ENCODE measurements at regions of chr3 and their contacts with region 1.

Region 1: DNA sequence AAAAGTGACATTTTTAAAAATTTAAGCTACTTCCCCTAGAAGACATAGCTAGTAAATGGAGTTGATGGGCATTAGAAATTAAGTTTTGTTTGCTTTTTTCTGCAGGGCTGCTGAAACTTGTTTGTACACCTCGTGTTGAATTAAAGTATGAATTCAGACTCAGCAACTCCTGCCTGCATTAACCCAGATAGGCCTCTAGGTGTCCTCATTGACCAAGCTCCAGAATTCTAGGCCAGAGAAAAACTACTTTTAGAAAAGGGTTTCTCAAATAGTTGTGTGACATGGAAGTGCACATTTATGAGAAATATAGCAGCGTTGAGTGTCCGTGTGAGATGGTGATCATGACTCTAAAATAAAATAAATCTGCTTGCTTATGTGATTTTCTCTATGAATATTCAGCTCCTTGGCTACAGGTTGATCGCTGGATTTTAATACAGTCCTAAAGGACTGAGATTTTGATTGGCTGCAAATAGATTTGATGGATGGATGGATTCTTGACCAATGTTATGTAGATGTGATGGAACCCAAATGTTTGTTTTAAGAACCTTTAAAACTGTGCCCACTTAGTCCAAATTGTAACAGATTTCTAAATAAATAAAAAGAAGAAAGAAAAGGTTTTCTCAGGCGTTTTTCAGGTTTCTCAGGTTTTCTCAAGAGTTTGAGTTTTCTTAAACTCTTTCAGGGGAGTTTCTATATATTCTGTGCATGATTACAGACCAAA is 39.4 kb upstream of the LMOD3 start:
- DNase-seq: peak; percentile 35
- H3K4me3 Mint-ChIP-seq: no peak overlapping the region
- H3K27ac Mint-ChIP-seq: no peak overlapping the region
- H3K4me1 Mint-ChIP-seq: peaks cover 14% of the 10 kb centered on the region
- H3K27me3 Mint-ChIP-seq: peaks cover 6% of the 10 kb centered on the region

Region 2: GRCh38 chr3:69095636-69096035 is 66.1 kb before region 1 on chr3:
- CTCF ChIA-PET with region 1: no interaction called
- POLR2A ChIA-PET with region 1: no interaction called
- intact Hi-C with region 1: no loop called
- DNase-seq: peak; percentile 63
- H3K4me3 Mint-ChIP-seq: peak overlapping the region; percentile 55
- H3K27ac Mint-ChIP-seq: peak overlapping the region; percentile 88
- H3K4me1 Mint-ChIP-seq: peaks cover 78% of the 10 kb centered on the region
- H3K27me3 Mint-ChIP-seq: no peaks in the 10 kb centered on the region

Region 3: DNA sequence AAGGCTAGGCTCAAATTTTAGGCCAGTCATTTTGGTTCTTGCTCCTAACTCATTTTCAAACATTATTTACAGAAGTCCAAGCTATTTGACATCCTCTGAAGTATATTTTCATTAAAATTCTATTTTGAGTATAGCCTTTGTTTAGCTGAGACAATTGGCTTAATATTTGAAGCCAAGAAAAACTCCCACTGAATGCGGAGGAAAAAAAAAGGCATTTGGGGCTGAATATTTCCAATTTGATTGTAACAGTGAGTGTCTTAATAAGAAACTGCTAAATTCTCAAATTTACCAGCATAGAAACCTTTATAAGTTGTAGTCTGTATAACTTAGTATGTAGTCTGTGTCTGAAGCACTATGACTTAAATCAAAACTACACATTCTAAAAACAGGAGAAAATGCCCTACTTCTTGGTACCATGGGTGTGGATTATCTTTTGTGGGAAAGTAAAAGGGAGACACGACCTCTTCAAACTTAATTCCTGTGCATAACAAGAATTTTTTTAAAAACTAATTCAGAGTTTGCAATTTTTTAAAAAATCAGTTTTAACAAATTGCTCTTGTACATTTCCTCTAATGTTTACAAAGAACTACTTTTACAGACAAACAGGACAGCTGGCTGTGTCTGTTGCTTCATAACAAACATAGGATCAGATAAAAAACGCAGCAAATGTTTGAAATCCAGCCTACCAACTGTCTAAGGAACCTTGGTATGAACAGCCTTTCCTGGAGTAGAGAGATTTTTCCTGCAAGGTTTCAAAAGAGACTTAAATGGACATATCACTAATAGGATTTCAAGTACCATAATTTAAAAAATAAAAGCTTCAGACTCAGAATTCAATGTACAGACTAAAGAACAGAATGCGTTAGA is 13.4 kb after region 1 on chr3:
- CTCF ChIA-PET with region 1: interaction called, 11 read pairs
- POLR2A ChIA-PET with region 1: interaction called, 4 read pairs
- intact Hi-C with region 1: no loop called
- DNase-seq: no peak
- H3K4me3 Mint-ChIP-seq: no peak overlapping the region
- H3K27ac Mint-ChIP-seq: no peak overlapping the region
- H3K4me1 Mint-ChIP-seq: peaks cover 33% of the 10 kb centered on the region
- H3K27me3 Mint-ChIP-seq: no peaks in the 10 kb centered on the region

Region 4: DNA sequence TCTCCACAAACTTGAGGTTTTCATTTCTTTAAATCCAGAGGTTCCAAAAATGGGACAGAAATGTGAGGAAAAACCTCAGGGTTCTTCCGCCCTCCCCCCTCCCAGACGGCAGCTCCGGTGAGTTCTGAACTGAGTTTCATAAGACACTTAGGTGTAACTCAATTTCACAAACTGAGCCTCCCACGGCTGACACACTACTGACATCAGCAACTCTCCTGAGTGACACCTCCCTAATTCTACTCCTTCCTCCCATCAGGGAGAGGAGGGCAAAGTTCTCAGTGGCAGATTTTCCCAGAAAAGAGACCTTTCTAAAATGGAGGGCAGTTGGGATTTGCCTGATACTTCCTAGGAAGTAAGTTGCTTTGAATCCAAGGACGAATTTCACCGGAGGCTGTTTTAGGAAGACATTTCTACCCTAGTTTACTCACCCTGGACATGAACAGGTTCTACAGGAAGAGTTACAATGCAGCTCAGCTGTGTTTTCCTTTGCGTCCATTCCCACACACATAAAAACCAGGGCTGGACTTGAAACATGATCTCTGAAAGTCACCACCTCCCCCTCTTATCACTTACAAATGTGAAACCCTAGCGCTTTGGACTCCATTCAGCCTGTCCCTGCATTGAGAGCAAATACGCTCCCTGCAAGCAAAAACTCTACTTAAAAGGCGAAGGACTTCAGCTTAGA is 38.8 kb after region 1 on chr3:
- CTCF ChIA-PET with region 1: interaction called, 26 read pairs
- POLR2A ChIA-PET with region 1: no interaction called
- intact Hi-C with region 1: loop called (anchors 1 kb)
- DNase-seq: peak; percentile 82
- H3K4me3 Mint-ChIP-seq: peak overlapping the region; percentile 92
- H3K27ac Mint-ChIP-seq: peak overlapping the region; percentile 98
- H3K4me1 Mint-ChIP-seq: peaks cover 74% of the 10 kb centered on the region
- H3K27me3 Mint-ChIP-seq: no peaks in the 10 kb centered on the region

Region 5: DNA sequence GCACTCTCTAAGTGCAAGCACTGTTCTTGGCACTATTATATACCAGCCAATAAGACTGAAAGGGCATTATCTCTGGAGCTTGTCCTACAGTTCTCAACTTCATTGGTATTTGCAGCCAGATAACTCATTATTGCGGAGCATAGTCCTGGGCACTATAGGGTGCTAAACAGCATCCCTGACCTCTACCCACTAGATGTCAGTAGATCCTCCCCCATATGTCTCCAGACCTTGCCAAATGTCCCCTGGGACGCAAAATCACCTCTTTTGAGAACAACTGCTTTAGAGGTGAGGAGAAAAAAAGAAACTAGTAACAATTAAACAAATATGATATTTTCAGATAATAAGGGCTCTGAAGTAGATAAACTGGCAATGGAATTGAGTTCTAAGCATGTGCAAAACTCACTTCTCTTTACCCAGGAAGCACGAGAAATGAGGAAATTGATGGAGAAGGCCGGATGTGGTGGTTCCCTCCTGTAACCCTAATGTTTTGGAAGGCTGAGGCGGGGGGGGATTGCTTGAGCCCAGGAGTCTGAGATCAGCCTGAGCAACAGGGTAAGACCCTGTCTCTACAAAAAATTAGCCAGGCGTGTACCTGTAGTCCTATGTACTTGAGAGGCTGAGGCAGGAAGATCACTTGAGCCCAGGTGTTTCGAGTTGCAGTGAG is 162.7 kb after region 1 on chr3:
- CTCF ChIA-PET with region 1: interaction called, 15 read pairs
- POLR2A ChIA-PET with region 1: no interaction called
- intact Hi-C with region 1: loop called (anchors 5 kb)
- DNase-seq: no peak
- H3K4me3 Mint-ChIP-seq: no peak overlapping the region
- H3K27ac Mint-ChIP-seq: no peak overlapping the region
- H3K4me1 Mint-ChIP-seq: peaks cover 47% of the 10 kb centered on the region
- H3K27me3 Mint-ChIP-seq: no peaks in the 10 kb centered on the region

Region 6: DNA sequence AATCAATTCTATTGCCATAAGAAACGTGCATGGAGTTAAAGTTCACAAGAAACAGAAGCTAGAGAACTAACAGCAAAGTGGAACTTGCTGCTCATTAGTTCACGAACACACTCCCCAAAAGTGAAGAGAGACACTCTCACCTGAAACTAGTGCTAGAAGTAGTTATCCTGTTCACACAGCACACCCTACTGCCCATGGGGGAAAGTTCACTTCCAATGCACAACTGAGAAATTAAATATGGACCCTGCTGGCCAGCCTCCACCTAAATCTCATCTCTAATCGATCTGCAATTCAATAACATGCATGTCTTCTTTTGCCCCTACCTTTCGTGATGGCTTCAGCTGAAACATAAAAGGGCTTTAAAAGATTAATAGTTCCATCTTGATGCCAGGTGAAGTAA is 263.5 kb after region 1 on chr3:
- CTCF ChIA-PET with region 1: interaction called, 34 read pairs
- POLR2A ChIA-PET with region 1: no interaction called
- intact Hi-C with region 1: loop called (anchors 1 kb)
- DNase-seq: peak; percentile 57
- H3K4me3 Mint-ChIP-seq: no peak overlapping the region
- H3K27ac Mint-ChIP-seq: no peak overlapping the region
- H3K4me1 Mint-ChIP-seq: peaks cover 2% of the 10 kb centered on the region
- H3K27me3 Mint-ChIP-seq: peaks cover 2% of the 10 kb centered on the region

Region 7: GRCh38 chr3:69671082-69671952 is 509.6 kb after region 1 on chr3:
- CTCF ChIA-PET with region 1: interaction called, 6 read pairs
- POLR2A ChIA-PET with region 1: no interaction called
- intact Hi-C with region 1: loop called (anchors 1 kb)
- DNase-seq: no peak
- H3K4me3 Mint-ChIP-seq: no peak overlapping the region
- H3K27ac Mint-ChIP-seq: no peak overlapping the region
- H3K4me1 Mint-ChIP-seq: no peaks in the 10 kb centered on the region
- H3K27me3 Mint-ChIP-seq: no peaks in the 10 kb centered on the region

Measured in activated CD4-positive, alpha-beta memory T cell treated with anti-CD3 and anti-CD28 coated beads for 36 hours (primary cell).